ENCODE measurements at regions of chrX and their contacts with region 1.

Region 1: GRCh38 chrX:79146640-79147390 is 2.3 kb downstream of the GPR174 start:
- DNase-seq: no peak
- ATAC-seq: peak; percentile 35
- H3K4me3 Mint-ChIP-seq: peak overlapping the region; percentile 96
- H3K27ac Mint-ChIP-seq: peak overlapping the region; percentile 85
- H3K4me1 Mint-ChIP-seq: peaks cover 41% of the 10 kb centered on the region
- H3K27me3 Mint-ChIP-seq: no peaks in the 10 kb centered on the region

Region 2: GRCh38 chrX:78945186-78945912 is 201.5 kb before region 1 on chrX and contains the start of gene P2RY10:
- CTCF ChIA-PET with region 1: no interaction called
- POLR2A ChIA-PET with region 1: interaction called, 15 read pairs
- DNase-seq: peak; percentile 42
- ATAC-seq: peak; percentile 85
- H3K4me3 Mint-ChIP-seq: peak within 1 kb of the TSS; percentile 97
- H3K27ac Mint-ChIP-seq: peak within 1 kb of the TSS; percentile 98
- H3K4me1 Mint-ChIP-seq: peaks cover 50% of the 10 kb centered on the region
- H3K27me3 Mint-ChIP-seq: no peaks in the 10 kb centered on the region
- total RNA-seq, gene P2RY10: 48.8 to 49.8 TPM

Region 3: GRCh38 chrX:79081895-79082512 is 64.8 kb before region 1 on chrX:
- CTCF ChIA-PET with region 1: interaction called, 12 read pairs
- POLR2A ChIA-PET with region 1: interaction called, 4 read pairs
- DNase-seq: peak; percentile 49
- ATAC-seq: peak; percentile 73
- H3K4me3 Mint-ChIP-seq: peak overlapping the region; percentile 70
- H3K27ac Mint-ChIP-seq: peak overlapping the region; percentile 71
- H3K4me1 Mint-ChIP-seq: peaks cover 31% of the 10 kb centered on the region
- H3K27me3 Mint-ChIP-seq: no peaks in the 10 kb centered on the region

Region 4: GRCh38 chrX:79107891-79108718 is 38.7 kb before region 1 on chrX:
- CTCF ChIA-PET with region 1: interaction called, 10 read pairs
- POLR2A ChIA-PET with region 1: interaction called, 33 read pairs
- DNase-seq: no peak
- ATAC-seq: peak; percentile 81
- H3K4me3 Mint-ChIP-seq: peak overlapping the region; percentile 62
- H3K27ac Mint-ChIP-seq: peak overlapping the region; percentile 91
- H3K4me1 Mint-ChIP-seq: peaks cover 41% of the 10 kb centered on the region
- H3K27me3 Mint-ChIP-seq: no peaks in the 10 kb centered on the region

Region 5: DNA sequence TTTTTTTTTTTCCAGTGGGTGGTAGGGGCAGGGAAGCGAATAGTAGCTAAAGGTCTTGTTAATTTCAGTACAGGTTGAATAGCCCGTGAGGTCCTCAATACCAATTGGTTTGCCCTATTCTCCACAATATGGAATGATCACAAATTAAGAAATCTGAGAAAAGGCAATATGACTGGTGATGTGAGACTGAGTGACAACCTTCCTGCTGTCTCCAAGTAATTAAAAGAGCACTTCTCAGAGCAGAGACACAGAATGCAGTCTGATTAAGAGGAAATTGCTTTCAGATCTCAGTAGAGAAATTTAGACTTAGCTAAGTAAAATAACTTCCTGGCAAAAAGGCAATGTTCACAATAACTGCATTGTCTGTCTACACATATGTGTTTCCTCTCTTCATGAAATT is 20.6 kb after region 1 on chrX:
- CTCF ChIA-PET with region 1: no interaction called
- POLR2A ChIA-PET with region 1: interaction called, 16 read pairs
- DNase-seq: no peak
- ATAC-seq: peak; percentile 20
- H3K4me3 Mint-ChIP-seq: peak overlapping the region; percentile 62
- H3K27ac Mint-ChIP-seq: peak overlapping the region; percentile 81
- H3K4me1 Mint-ChIP-seq: peaks cover 85% of the 10 kb centered on the region
- H3K27me3 Mint-ChIP-seq: no peaks in the 10 kb centered on the region

Measured in activated CD8-positive, alpha-beta T cell treated with anti-CD3 and anti-CD28 coated beads, Interleukin-2, amount 10 ng/mL, durations not matched to agents 7 days and 5 days (primary cell).